Activated CD8-positive, alpha-beta T cell treated with anti-CD3 and anti-CD28 coated beads for 36 hours (primary cell): ENCODE measurements at regions of chrX and their contacts with region 1.

Region 1: GRCh38 chrX:2627272-2627867 is 63.7 kb upstream of the CD99 start:
- DNase-seq: peak; percentile 76
- ATAC-seq: peak; percentile 76
- H3K4me3 Mint-ChIP-seq: no peak overlapping the region
- H3K27ac Mint-ChIP-seq: peak overlapping the region; percentile 91
- H3K4me1 Mint-ChIP-seq: peaks cover 48% of the 10 kb centered on the region
- H3K27me3 Mint-ChIP-seq: no peaks in the 10 kb centered on the region
- CTCF ChIP-seq: peak; percentile 75

Region 2: DNA sequence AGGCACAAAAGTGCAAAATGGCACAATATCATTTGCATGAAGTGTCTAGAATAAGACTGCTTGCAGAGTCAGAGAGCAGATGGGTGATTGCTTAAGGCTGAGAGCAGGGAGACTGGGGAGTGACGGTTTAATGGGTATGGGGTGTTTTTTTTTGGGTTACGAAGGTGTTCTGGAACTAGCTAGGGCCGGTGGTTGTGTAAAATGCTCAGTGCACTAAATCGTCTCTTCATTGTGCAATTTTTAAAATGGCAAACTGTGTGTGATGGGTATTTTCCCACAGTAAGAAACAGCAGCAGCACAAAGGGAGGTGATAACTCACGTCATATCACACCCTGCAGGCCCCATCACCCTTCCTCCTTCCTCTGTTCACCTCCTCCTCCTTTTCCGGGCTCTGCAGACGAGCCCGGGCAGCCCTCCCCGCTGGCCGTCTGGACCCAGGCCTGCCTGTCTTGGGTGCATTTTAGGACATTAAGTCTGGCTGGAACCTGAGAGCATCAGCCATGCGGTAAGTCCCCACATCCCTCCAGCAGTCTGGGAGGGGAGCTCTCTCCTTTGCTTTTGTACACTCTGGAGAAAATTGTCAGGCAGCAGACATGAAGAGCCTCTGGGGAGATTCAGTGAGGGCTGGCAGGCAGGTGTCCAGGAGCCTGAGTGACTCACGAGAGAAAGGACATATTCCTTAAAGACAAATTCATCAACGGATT is 969.9 kb before region 1 on chrX:
- CTCF ChIA-PET with region 1: no interaction called
- POLR2A ChIA-PET with region 1: no interaction called
- intact Hi-C with region 1: loop called (anchors 10 kb)
- DNase-seq: peak; percentile 84
- ATAC-seq: peak; percentile 51
- H3K4me3 Mint-ChIP-seq: peak overlapping the region; percentile 100
- H3K27ac Mint-ChIP-seq: peak overlapping the region; percentile 99
- H3K4me1 Mint-ChIP-seq: peaks cover 28% of the 10 kb centered on the region
- H3K27me3 Mint-ChIP-seq: no peaks in the 10 kb centered on the region
- CTCF ChIP-seq: no peak

Region 3: GRCh38 chrX:2500267-2501075 is 126.9 kb before region 1 on chrX and contains the starts of genes DHRSX and ZBED1:
- CTCF ChIA-PET with region 1: no interaction called
- POLR2A ChIA-PET with region 1: no interaction called
- intact Hi-C with region 1: no loop called
- DNase-seq: peak; percentile 48
- ATAC-seq: peak; percentile 82
- H3K4me3 Mint-ChIP-seq: peak within 1 kb of the TSS; percentile 74
- H3K27ac Mint-ChIP-seq: peak within 1 kb of the TSS; percentile 87
- H3K4me1 Mint-ChIP-seq: peaks cover 24% of the 10 kb centered on the region
- H3K27me3 Mint-ChIP-seq: no peaks in the 10 kb centered on the region
- CTCF ChIP-seq: no peak
- total RNA-seq, gene DHRSX: 19.7 to 22.0 TPM
- total RNA-seq, gene ZBED1: 26.3 to 28.7 TPM